Left cardiac atrium (tissue), 4 donors: ENCODE measurements at regions of chr14 and their contacts with region 1.

Region 1: DNA sequence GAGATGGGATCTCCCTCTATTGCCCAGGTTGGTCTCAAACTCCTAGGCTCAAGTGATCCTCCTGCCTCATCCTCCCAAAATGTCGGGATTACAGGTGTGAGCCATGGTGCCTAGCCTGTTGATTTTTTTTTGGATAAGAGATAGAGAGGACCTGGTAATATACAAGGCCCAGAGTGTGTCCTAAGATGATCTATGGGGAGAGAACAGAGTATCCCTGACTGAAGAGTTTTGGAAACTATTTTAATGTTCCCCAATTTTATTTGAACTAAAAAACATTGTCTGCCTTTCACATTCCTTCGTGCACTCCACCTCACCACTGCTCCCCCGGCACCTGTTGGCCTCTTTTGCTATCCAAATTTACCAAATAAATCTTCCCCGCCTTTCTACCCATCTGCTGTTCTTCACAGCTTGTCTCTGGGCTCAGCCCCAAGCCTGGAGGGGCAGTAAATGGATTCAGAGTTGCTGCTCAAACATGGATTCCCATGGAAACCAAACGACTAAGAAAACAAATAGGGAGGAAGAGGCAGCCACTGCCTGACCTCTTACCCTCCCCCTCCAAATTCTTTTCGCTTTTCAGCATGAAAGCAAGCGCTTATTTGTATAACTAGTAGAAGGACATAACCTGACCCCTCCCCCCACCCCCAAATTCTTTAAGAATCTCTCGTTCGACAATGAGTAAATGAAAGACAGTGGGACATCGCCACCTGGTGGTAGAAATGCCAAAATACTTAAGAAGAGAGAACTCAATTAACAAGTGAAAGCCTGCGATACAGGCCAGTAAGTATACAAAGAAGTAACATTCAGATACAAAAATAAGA is 22.6 kb downstream of the OR10G3 start:
- DNase-seq: peak; percentile 65
- ATAC-seq: peak; percentile 94

Region 2: DNA sequence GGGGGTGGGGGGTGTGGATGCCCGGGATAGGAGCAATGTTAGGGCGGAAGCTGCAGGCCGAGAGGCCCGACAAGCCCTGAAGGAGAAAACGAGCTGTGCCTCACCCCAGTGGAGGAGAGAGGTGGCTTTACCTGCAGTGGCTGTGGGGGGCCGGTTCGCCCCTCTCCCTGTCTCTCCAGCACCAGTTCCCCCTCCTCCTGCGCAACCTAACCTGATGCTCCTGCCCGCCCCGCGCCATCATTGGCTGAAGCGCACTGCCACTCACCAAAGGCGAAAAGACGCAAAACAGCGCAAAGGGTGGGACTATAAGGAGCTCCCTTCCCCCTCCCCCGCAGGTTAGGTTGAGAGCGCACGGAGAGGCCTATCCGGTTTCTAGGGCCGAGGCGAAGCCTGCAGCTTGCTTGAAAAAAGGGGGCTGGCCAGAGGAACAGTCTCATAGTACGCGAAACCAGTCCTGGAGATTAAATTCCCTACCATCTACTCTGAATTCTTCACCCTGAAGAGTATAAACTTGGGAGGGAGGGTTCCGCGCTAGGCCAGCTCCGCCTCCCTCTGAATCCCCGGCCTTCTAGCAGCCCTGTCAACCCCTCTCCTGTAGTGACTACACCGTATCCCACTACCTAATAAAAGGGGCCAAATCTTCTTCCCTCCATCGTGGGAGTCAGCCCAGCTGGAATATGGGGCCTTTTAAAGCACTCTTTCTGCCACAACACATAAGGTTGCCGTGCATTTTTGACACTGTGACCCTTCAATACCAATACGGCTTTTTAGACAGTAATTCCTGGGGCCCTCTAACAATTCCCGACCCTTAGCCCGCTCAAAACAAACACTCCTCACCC is 120.0 kb before region 1 on chr14:
- intact Hi-C with region 1: loop called in 1 of 2 experiments (anchors 5 kb)
- DNase-seq: peak; percentile 99
- ATAC-seq: peak; percentile 100

Region 3: DNA sequence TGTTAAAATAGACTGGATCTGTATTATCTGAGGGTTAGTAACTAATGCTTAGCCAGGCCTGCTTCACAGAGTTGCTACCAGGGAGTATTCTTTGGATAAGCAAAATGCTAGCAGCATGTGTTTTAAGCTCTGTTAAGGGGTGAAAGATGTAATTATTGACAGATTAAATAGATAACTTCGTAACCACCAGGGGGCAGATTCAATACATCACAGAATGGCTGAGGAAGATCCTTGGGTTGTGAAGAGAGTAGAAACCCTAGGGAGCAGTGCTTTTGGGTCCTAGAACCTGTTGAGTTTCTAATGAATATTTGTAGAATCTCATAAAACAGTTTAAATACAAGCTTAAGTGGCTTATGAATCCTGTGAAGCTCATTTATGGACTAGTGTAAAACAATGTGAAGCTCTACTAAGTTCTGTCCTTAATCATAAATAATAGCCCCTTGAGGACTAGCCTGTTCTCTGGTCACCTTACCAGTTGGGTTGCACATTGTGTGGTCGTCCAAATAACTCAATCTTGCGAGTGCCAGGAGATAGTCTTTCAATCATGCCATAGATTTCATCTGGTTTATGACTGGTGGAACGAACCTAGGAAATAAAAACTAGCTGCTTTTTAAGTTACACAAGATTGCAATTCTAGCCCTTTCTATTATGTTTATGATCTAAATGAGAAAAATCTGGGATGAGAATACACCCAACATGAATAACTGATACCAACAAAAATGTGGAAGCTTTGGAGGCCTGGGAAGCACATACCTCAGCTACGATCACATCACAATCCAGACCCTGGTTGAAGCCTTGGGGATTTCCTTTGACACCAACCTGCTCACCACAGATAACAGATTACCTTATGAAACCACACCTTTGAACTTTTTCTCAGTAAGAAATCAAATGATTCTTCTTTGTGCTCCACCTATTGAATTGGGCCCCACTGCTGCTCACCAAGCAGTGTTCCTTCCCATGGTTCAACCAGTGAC is 58.5 kb before region 1 on chr14:
- intact Hi-C with region 1: loop called in 1 of 2 experiments (anchors 5 kb)
- DNase-seq: no peak
- ATAC-seq: peak in 1 of 2 donors; percentile 30